ENCODE measurements at regions of chr14 and their contacts with region 1.

Region 1: GRCh38 chr14:57486767-57487379 is 6.8 kb downstream of the CCDC198 start:
- DNase-seq: no peak
- ATAC-seq: no peak
- H3K4me3 ChIP-seq: no peak overlapping the region
- H3K27ac ChIP-seq: no peak overlapping the region
- H3K4me1 ChIP-seq: no peaks in the 10 kb centered on the region
- H3K27me3 ChIP-seq: no peaks in the 10 kb centered on the region
- CTCF ChIP-seq: peak in 3 of 5 experiments; percentile 12 to 50 (median 40)
- POLR2A ChIP-seq: no peak

Region 2: DNA sequence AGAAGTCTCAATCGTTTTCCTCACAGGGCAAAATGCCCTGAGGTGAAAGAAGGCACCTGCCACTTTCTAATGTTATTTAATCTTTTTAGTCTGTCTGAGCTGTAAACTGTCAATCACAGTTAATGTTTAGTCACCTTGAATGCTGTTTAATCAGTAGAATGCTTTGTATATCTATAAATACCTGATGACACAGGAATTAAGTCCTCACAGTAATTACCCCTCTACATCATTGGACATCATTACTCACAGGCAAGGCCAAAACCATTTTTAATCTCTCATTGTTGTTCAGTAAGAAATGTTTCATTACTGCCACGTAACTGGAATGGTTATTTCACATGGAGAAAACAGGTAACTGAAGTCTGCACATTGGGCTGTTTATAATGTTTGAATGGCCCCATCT is 397.0 kb before region 1 on chr14:
- in situ Hi-C with region 1: no loop called
- intact Hi-C with region 1: no loop called
- DNase-seq: no peak
- ATAC-seq: no peak
- H3K4me3 ChIP-seq: no peak overlapping the region
- H3K27ac ChIP-seq: no peak overlapping the region
- H3K4me1 ChIP-seq: no peaks in the 10 kb centered on the region
- H3K27me3 ChIP-seq: no peaks in the 10 kb centered on the region
- CTCF ChIP-seq: no peak
- POLR2A ChIP-seq: no peak

Region 3: DNA sequence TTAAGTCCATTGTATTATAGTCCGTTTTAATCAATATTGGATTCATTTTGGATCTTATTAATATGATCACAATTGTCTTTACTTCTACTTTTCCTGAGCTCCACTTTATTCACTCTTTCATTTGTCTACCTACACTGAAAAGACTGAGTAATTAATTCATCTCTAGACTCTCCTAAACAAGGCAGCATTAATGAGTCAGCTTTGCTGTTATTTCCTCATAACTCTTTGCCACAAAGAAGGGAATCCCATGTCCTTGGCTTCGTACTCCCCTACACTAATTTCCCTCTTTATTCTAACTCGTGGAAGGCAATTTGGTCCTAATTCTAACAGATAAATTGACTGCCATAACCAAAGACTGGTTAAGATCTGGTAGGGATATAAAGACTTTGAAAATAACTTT is 573.2 kb after region 1 on chr14:
- in situ Hi-C with region 1: loop called in 3 of 4 experiments (anchors 5 to 25 kb)
- intact Hi-C with region 1: no loop called
- DNase-seq: no peak
- ATAC-seq: no peak
- H3K4me3 ChIP-seq: no peak overlapping the region
- H3K27ac ChIP-seq: no peak overlapping the region
- H3K4me1 ChIP-seq: no peaks in the 10 kb centered on the region
- H3K27me3 ChIP-seq: no peaks in the 10 kb centered on the region
- CTCF ChIP-seq: no peak
- POLR2A ChIP-seq: no peak

Region 4: DNA sequence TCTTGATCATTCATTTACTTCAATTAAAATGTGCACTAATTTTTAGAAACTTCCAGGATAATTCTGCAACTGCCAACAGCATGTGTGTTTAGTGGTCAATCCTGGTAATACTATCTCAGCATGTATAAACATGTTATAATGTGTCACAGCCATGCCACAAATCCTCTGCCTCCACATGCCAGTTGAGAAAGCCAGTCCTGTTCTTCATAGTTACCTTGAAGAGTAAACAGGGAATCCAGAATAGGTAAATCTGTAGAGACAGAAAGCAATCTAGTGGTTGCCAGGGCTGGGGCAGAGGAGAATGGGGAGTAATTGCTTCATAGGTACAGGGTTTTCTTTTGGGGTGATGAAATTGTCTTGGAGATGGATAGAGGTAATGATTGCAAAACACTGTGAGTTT is 579.2 kb after region 1 on chr14:
- in situ Hi-C with region 1: loop called (anchors 5 to 25 kb)
- intact Hi-C with region 1: loop called (anchors 5 kb)
- DNase-seq: no peak
- ATAC-seq: no peak
- H3K4me3 ChIP-seq: no peak overlapping the region
- H3K27ac ChIP-seq: no peak overlapping the region
- H3K4me1 ChIP-seq: no peaks in the 10 kb centered on the region
- H3K27me3 ChIP-seq: no peaks in the 10 kb centered on the region
- CTCF ChIP-seq: no peak
- POLR2A ChIP-seq: no peak

Region 5: DNA sequence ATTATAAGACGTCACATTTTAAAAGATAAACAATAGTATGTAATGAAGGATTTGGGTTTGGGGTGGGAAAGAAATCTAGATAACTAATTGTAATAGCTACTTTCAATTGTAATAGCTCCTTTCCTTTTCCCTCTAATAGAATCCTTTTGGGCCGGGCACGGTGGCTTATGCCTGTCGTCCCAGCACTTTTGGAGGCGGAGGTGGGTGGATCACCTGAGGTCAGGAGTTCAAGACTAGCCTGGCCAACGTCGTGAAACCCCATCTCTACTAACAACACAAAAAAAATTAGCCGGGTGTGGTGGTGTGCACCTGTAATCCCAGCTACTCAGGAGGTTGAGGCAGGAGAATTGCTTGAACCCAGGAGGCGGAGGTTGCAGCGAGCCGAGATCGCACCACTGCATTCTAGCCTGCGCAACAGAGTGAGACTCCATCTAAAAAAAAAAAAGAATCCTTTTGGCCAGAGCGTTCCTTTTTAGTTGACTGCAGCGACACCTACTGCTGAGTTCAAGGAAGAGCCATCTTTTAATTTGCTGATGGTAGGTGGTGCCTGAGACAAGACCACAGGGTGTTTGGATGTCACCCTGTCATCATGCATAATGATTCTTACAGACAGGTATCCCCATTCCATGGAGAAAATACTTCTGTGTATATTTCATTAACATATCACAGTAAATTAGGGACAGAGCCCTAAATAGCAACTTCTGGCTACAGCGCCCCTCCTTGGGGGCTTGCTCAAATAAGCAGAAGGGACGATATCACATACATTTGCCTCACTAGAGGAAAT is 585.6 kb after region 1 on chr14:
- in situ Hi-C with region 1: loop called (anchors 5 to 25 kb)
- intact Hi-C with region 1: loop called (anchors 5 kb)
- DNase-seq: no peak
- ATAC-seq: peak; percentile 58 to 65
- H3K4me3 ChIP-seq: peak overlapping the region in 3 of 4 donors; percentile 22 to 44 (median 27)
- H3K27ac ChIP-seq: no peak overlapping the region
- H3K4me1 ChIP-seq: no peaks in the 10 kb centered on the region
- H3K27me3 ChIP-seq: no peaks in the 10 kb centered on the region
- CTCF ChIP-seq: peak; percentile 19 to 63 (median 49)
- POLR2A ChIP-seq: no peak

Measured in gastrocnemius medialis (tissue), 4 donors.